ENCODE measurements at regions of chr12 and their contacts with region 1.

Region 1: GRCh38 chr12:9869307-9870161 is at the start of gene CLEC2B:
- DNase-seq: peak; percentile 41
- H3K4me3 Mint-ChIP-seq: peak within 1 kb of the TSS; percentile 82
- H3K27ac Mint-ChIP-seq: peak within 1 kb of the TSS; percentile 93
- H3K4me1 Mint-ChIP-seq: peaks cover 19% of the 10 kb centered on the region
- H3K27me3 Mint-ChIP-seq: no peaks in the 10 kb centered on the region
- total RNA-seq, gene CLEC2B: 12.6 to 13.7 TPM

Region 2: DNA sequence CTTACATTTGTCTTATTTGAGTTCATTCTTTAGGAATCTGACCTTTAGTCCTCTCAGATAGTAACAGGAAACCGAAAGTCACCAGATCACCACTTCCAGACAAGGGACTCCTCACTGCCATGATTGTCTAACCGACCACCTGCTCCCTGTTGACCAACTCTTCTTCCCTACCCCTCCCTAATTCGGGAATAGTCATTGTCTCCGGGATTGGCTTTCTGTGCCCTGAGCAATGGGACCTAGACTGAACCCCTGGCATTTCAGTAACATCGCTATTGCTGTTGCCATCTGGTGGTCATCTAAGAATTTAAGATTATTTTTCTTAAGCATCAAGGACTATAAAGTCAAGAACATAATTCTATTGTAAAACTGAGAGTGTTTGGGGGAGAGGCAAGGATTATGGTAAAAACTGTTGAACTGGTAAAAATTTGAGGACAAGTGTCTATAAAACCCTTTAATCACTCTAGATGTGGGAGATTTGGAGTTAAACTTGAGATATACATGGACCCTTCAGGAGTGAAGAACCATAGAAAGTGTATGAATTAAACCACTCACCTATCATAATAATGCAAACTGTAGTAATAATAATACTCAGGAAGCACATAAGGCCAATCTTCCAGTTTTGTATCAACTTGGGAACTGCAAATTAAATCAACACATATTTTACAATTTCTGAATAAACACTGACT is 56.3 kb after region 1 on chr12:
- CTCF ChIA-PET with region 1: interaction called, 5 read pairs
- POLR2A ChIA-PET with region 1: no interaction called
- intact Hi-C with region 1: loop called (anchors 2 kb)
- DNase-seq: no peak
- H3K4me3 Mint-ChIP-seq: peak overlapping the region; percentile 45
- H3K27ac Mint-ChIP-seq: no peak overlapping the region
- H3K4me1 Mint-ChIP-seq: peaks cover 14% of the 10 kb centered on the region
- H3K27me3 Mint-ChIP-seq: peaks cover 3% of the 10 kb centered on the region

Region 3: GRCh38 chr12:9948606-9949296 is 79.2 kb after region 1 on chr12:
- CTCF ChIA-PET with region 1: no interaction called
- POLR2A ChIA-PET with region 1: no interaction called
- intact Hi-C with region 1: loop called (anchors 2 kb)
- DNase-seq: no peak
- H3K4me3 Mint-ChIP-seq: no peak overlapping the region
- H3K27ac Mint-ChIP-seq: no peak overlapping the region
- H3K4me1 Mint-ChIP-seq: peaks cover 42% of the 10 kb centered on the region
- H3K27me3 Mint-ChIP-seq: no peaks in the 10 kb centered on the region

Measured in activated CD4-positive, alpha-beta memory T cell treated with anti-CD3 and anti-CD28 coated beads for 36 hours (primary cell).